ENCODE measurements at regions of chr5 and their contacts with region 1.

Region 1: GRCh38 chr5:172714491-172715421 is 56.2 kb downstream of the DUSP1 start:
- DNase-seq: peak; percentile 47
- ATAC-seq: peak; percentile 76
- H3K4me3 ChIP-seq: no peak overlapping the region
- H3K27ac ChIP-seq: peak overlapping the region; percentile 66
- H3K4me1 ChIP-seq: peaks cover 42% of the 10 kb centered on the region
- H3K27me3 ChIP-seq: no peaks in the 10 kb centered on the region
- CTCF ChIP-seq: peak; percentile 95

Region 2: DNA sequence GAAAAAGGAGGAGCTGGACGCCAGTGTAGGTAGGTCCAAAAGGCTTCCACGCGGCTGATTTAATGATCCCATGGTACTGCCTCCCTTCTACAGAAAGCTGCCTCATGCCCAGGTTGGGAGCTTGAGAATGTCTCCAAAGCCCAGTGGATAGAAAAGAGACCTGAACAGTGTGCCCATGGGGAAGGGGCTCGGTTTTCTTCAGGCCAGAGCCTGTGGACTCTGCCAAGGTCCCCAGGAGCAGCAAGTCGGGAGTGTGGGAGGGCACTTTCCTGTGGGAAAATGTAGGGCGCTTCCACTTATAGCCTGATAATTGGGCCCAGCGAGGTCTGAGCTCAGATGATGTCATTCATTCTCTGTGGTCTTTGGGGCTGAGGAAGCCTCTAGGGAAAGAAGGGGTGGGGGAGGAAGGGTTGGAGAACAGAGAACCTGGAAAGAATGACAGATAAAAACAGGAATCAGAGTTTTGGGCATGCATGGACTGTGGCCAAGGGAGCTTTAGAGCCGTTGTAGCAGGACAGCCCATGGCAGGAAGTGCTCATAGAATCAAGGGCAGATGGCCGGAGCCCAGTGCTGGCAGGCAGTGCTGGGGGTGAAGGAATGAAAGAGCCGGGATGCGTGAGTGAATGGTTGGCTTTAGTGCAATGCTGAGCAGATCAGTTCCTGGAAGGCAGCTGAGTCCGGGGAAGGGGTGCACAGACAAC is 217.9 kb before region 1 on chr5:
- CTCF ChIA-PET with region 1: no interaction called
- POLR2A ChIA-PET with region 1: no interaction called
- in situ Hi-C with region 1: no loop called
- intact Hi-C with region 1: no loop called
- DNase-seq: no peak
- ATAC-seq: 0 out of 2 replicates have a peak, but pooled peaks have one; percentile 15
- H3K4me3 ChIP-seq: no peak overlapping the region
- H3K27ac ChIP-seq: no peak overlapping the region
- H3K4me1 ChIP-seq: no peaks in the 10 kb centered on the region
- H3K27me3 ChIP-seq: no peaks in the 10 kb centered on the region
- CTCF ChIP-seq: no peak

Region 3: DNA sequence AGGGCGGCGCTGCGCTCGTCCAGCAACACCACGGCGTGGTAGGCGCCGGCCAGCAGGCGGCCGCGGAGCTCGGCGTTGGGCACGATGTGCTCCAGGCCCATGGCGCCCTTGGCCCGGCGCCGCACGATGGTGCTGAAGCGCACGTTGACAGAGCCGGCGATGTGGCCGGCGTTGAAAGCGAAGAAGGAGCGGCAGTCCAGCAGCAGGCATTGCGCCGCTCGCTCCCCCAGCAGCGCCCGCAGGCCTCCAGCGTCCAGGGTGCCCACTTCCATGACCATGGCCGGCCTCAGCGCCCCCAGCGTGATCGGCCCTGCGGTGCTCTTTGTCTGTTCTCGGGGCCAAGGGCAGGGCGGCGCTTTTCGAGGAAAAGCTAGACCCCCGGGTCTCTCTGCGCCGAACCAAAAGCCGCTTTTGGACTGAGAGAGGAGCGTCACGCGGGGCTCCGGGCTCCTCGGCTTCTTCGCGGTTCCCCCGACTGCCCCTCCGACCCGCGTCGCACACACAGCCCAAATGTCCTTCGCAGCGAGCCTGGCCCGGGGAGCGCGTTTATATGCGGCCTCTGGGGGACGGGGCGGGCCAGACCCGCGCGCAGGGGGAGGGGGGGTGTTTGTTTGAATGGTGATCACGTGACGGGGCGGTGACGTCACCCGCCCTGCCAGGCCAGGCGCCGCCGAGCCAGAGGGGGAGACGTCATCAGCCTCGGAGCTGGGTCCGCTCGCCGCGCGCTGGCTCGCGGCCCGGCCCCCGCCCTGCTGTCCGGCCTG is 56.1 kb after region 1 on chr5 and contains the start of gene DUSP1:
- CTCF ChIA-PET with region 1: interaction called, 15 read pairs
- POLR2A ChIA-PET with region 1: no interaction called
- in situ Hi-C with region 1: no loop called
- intact Hi-C with region 1: loop called (anchors 2 kb)
- DNase-seq: peak; percentile 76
- ATAC-seq: peak; percentile 72
- H3K4me3 ChIP-seq: peak within 1 kb of the TSS; percentile 78 to 97
- H3K27ac ChIP-seq: peak within 1 kb of the TSS; percentile 99
- H3K4me1 ChIP-seq: peaks cover 69% of the 10 kb centered on the region
- H3K27me3 ChIP-seq: no peaks in the 10 kb centered on the region
- CTCF ChIP-seq: peak; percentile 80
- total RNA-seq, gene DUSP1: 79.9 TPM

Region 4: DNA sequence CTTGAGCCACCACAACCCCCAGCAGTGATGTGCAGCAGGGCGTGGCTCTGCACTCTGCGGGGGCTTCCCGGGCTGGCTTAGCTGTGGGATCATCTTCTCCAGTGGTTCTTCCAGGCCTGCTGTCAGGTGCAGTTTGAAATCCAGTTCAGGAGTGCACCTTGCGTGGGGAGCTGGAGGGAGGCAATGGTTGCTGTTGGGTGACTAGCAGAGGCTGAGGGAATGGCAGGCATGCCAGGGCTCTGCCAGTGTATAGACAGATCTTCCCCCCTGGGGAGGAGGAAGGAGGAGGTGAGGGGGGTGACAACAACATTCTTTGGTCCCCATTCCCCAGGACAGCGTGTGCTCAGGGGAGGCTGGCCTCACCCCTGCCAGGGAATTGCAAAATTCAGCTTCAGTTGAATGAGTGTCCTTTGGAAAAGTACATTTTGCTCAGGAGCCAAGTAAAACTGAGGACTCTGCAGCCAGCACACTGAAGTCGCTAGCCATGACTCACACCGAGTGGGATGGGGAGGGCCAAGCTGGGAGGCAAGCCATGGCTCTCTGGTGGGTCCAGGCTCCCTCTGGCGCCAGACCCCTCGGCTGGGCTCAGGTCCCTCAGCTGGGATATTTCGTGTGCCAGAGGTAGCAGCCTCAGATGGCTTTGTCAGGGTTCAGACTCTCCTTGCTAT is 154.3 kb after region 1 on chr5:
- CTCF ChIA-PET with region 1: interaction called, 4 read pairs
- POLR2A ChIA-PET with region 1: interaction called, 4 read pairs
- in situ Hi-C with region 1: no loop called
- intact Hi-C with region 1: loop called (anchors 10 kb)
- DNase-seq: peak; percentile 79
- ATAC-seq: peak; percentile 78
- H3K4me3 ChIP-seq: peak overlapping the region in 1 of 2 experiments; percentile 25; a peak in 2 of 4 replicates
- H3K27ac ChIP-seq: peak overlapping the region; percentile 98
- H3K4me1 ChIP-seq: peaks cover 97% of the 10 kb centered on the region
- H3K27me3 ChIP-seq: no peaks in the 10 kb centered on the region
- CTCF ChIP-seq: no peak

Region 5: GRCh38 chr5:172902497-172903200 is 187.9 kb after region 1 on chr5:
- CTCF ChIA-PET with region 1: interaction called, 3 read pairs
- POLR2A ChIA-PET with region 1: interaction called, 3 read pairs
- in situ Hi-C with region 1: no loop called
- intact Hi-C with region 1: loop called (anchors 10 kb)
- DNase-seq: no peak
- ATAC-seq: peak; percentile 62
- H3K4me3 ChIP-seq: no peak overlapping the region
- H3K27ac ChIP-seq: peak overlapping the region; percentile 85
- H3K4me1 ChIP-seq: peaks cover 76% of the 10 kb centered on the region
- H3K27me3 ChIP-seq: no peaks in the 10 kb centered on the region
- CTCF ChIP-seq: peak; percentile 86; the same call in 1 of the 2 replicates

Region 6: DNA sequence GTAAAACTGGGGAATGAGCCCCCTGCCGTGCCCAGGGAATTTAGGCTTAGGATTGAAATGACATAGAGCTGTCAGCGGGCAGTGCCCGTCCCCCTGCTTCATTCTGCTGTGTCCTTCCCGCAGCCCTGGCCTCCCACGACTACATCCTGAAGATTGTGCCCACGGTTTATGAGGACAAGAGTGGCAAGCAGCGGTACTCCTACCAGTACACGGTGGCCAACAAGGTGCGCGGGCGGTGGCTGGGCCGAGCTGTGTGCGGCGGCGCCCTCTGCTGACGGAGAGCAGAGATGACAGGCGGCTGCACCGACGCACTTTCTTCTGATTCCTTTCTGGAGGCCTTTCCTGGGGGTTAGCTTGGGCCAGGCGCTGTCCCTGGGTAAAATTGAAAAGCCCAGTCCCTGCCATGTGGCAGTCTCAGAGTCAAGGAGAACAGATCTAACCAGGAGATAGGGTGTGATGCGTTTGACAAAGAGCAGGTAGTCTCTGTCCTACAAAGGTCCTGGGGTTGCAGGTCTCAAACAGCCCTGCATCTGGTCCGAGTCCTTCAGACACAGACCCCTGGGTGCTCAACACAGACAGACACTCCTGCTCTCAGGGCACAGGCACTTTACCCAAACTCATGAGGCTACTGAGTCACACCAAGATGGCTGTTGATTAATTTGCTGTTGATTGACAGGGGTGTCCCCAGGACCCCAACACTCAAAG is 217.7 kb after region 1 on chr5:
- CTCF ChIA-PET with region 1: interaction called, 14 read pairs
- POLR2A ChIA-PET with region 1: no interaction called
- in situ Hi-C with region 1: no loop called
- intact Hi-C with region 1: loop called (anchors 1 kb)
- DNase-seq: no peak
- ATAC-seq: peak; percentile 82
- H3K4me3 ChIP-seq: no peak overlapping the region
- H3K27ac ChIP-seq: peak overlapping the region; percentile 36; the same call in 1 of the 2 replicates
- H3K4me1 ChIP-seq: peaks cover 19% of the 10 kb centered on the region
- H3K27me3 ChIP-seq: no peaks in the 10 kb centered on the region
- CTCF ChIP-seq: peak; percentile 98

Region 7: GRCh38 chr5:172958331-172959046 is 243.7 kb after region 1 on chr5:
- CTCF ChIA-PET with region 1: interaction called, 10 read pairs
- POLR2A ChIA-PET with region 1: no interaction called
- in situ Hi-C with region 1: no loop called
- intact Hi-C with region 1: loop called (anchors 5 kb)
- DNase-seq: no peak
- ATAC-seq: peak; percentile 86
- H3K4me3 ChIP-seq: peak overlapping the region; percentile 82 to 85
- H3K27ac ChIP-seq: peak overlapping the region; percentile 82
- H3K4me1 ChIP-seq: peaks cover 18% of the 10 kb centered on the region
- H3K27me3 ChIP-seq: no peaks in the 10 kb centered on the region
- CTCF ChIP-seq: no peak